A549 (cell line): ENCODE measurements at regions of chr6 and their contacts with region 1.

Region 1: DNA sequence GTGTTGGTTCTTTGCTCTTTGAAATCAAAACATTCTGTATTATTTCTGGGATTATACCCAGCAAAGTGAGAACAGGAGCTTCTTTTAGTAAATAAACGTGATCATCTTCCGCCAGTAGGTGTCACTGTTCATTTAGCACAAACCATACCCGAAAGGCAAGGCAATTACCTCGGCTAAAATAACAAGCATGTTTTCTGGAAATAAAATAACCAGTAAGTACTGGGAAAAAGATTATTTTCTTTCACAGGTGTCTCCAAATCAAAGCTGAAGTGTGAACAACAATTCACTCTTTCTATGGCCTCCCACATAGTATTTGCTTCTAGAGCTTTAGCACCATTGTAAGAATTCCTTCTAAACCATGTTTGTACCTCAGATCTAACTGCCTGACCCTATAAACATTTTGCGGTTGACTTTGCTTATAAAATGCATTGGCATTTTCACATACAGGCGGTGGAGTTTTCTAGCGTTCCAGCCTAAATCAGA is 144.6 kb upstream of the AGPAT4 start:
- DNase-seq: peak in 1 of 2 experiments; percentile 70
- ATAC-seq: peak; percentile 75 to 82; a peak in 5 of 6 replicates
- H3K4me3 ChIP-seq: no peak overlapping the region
- H3K27ac ChIP-seq: peak overlapping the region; percentile 59 to 83; a peak in 5 of 6 replicates
- H3K4me1 ChIP-seq: peaks cover 21% of the 10 kb centered on the region
- CTCF ChIP-seq: peak; percentile 69
- EP300 ChIP-seq: no peak
- POLR2A ChIP-seq: no peak
- RAD21 ChIP-seq: peak; percentile 81 to 82

Region 2: GRCh38 chr6:161333410-161333809 is 85.1 kb before region 1 on chr6:
- CTCF ChIA-PET with region 1: no interaction called
- POLR2A ChIA-PET with region 1: no interaction called
- DNase-seq: no peak
- ATAC-seq: no peak
- H3K4me3 ChIP-seq: no peak overlapping the region
- H3K27ac ChIP-seq: no peak overlapping the region
- H3K4me1 ChIP-seq: no peaks in the 10 kb centered on the region
- CTCF ChIP-seq: no peak
- EP300 ChIP-seq: no peak
- POLR2A ChIP-seq: no peak
- RAD21 ChIP-seq: no peak

Region 3: GRCh38 chr6:161393839-161394364 is 24.6 kb before region 1 on chr6:
- CTCF ChIA-PET with region 1: interaction called, 19 read pairs
- POLR2A ChIA-PET with region 1: no interaction called
- DNase-seq: peak; percentile 67 to 79
- ATAC-seq: peak; percentile 93 to 98
- H3K4me3 ChIP-seq: no peak overlapping the region
- H3K27ac ChIP-seq: peak overlapping the region; percentile 49 to 76; a peak in 4 of 6 replicates
- H3K4me1 ChIP-seq: no peaks in the 10 kb centered on the region
- CTCF ChIP-seq: peak; percentile 82
- EP300 ChIP-seq: no peak
- POLR2A ChIP-seq: no peak
- RAD21 ChIP-seq: peak; percentile 83 to 85

Region 4: DNA sequence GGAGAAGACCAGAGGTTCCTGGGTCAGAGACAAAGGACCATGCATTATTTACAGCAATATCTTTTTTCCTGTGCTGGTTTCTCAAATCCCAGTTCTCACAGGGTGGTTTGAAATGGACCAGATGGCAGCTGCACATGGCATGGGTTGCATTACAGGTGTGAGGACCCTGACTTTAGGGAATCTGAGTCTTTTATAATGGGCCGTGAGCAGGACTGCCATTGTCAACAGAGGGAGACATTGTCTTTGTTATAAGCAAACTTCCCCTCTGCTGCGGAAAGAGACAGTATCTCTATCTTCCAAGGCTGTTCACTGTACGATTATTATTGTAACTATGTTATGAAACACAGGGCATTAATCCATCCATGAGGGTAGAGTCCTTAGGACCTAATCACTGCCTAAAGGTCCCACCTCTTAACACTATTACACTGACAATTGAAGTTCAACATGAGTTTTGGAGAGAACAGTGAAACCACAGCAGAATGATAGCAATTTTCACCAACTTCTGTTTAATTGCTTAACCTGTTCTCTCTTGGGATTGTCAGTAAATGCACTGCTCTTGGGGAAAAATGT is 11.5 kb after region 1 on chr6:
- CTCF ChIA-PET with region 1: interaction called, 13 read pairs
- POLR2A ChIA-PET with region 1: no interaction called
- DNase-seq: peak in 1 of 2 experiments; percentile 27
- ATAC-seq: peak in 1 of 2 experiments; percentile 62; a peak in 2 of 6 replicates
- H3K4me3 ChIP-seq: no peak overlapping the region
- H3K27ac ChIP-seq: no peak overlapping the region
- H3K4me1 ChIP-seq: peaks cover 14% of the 10 kb centered on the region
- CTCF ChIP-seq: no peak
- EP300 ChIP-seq: no peak
- POLR2A ChIP-seq: no peak
- RAD21 ChIP-seq: peak; percentile 35 to 55; a peak in 3 of 5 replicates

Region 5: GRCh38 chr6:161445021-161445799 is 26.7 kb after region 1 on chr6:
- CTCF ChIA-PET with region 1: interaction called, 13 read pairs
- POLR2A ChIA-PET with region 1: no interaction called
- DNase-seq: no peak
- ATAC-seq: no peak
- H3K4me3 ChIP-seq: no peak overlapping the region
- H3K27ac ChIP-seq: no peak overlapping the region
- H3K4me1 ChIP-seq: no peaks in the 10 kb centered on the region; the same call in 2 of the 3 replicates
- CTCF ChIP-seq: no peak
- EP300 ChIP-seq: no peak
- POLR2A ChIP-seq: no peak
- RAD21 ChIP-seq: no peak

Region 6: GRCh38 chr6:161618831-161619454 is 200.4 kb after region 1 on chr6:
- CTCF ChIA-PET with region 1: interaction called, 12 read pairs
- POLR2A ChIA-PET with region 1: no interaction called
- DNase-seq: peak; percentile 53 to 80
- ATAC-seq: peak; percentile 94 to 99
- H3K4me3 ChIP-seq: peak overlapping the region; percentile 29; the same call in 1 of the 3 replicates
- H3K27ac ChIP-seq: peak overlapping the region; percentile 56 to 76; a peak in 3 of 6 replicates
- H3K4me1 ChIP-seq: no peaks in the 10 kb centered on the region
- CTCF ChIP-seq: peak; percentile 65
- EP300 ChIP-seq: no peak
- POLR2A ChIP-seq: no peak
- RAD21 ChIP-seq: peak; percentile 79